AG04449 (cell line): ENCODE measurements at regions of chr20 and their contacts with region 1.

Region 1: GRCh38 chr20:4091490-4092479 is 76.4 kb upstream of the RNF24 start:
- DNase-seq: no peak
- H3K4me3 ChIP-seq: no peak overlapping the region
- CTCF ChIP-seq: peak; percentile 82

Region 2: GRCh38 chr20:4014031-4014474 is 77.7 kb before region 1 on chr20:
- CTCF ChIA-PET with region 1: interaction called, 99 read pairs
- POLR2A ChIA-PET with region 1: no interaction called
- DNase-seq: peak; percentile 28
- H3K4me3 ChIP-seq: peak overlapping the region; percentile 85
- CTCF ChIP-seq: peak; percentile 67

Region 3: DNA sequence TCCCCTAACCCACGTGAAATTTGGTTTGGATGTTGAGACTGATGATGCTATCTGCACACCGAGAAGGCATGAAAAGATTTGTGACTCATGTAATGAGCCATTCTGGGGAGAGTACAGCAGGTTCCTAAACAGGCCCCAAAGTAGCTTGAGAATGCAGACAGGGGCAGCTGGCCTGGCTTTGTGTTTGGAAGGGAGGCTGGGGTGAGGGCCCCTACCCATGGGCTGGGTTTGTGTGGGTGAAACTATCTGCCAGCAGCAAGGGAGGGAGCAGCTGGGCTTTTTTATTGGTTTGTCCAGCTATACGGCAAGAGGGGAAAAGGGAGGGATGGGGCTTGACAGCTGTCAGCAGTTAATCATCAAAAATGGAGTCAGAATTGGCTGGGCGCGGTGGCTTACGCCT is 10.6 kb after region 1 on chr20:
- CTCF ChIA-PET with region 1: interaction called, 36 read pairs
- POLR2A ChIA-PET with region 1: no interaction called
- DNase-seq: no peak
- H3K4me3 ChIP-seq: no peak overlapping the region
- CTCF ChIP-seq: no peak

Region 4: GRCh38 chr20:4195499-4195898 is 103.7 kb after region 1 on chr20:
- CTCF ChIA-PET with region 1: interaction called, 17 read pairs
- POLR2A ChIA-PET with region 1: no interaction called
- DNase-seq: no peak
- H3K4me3 ChIP-seq: no peak overlapping the region
- CTCF ChIP-seq: peak; percentile 67